ENCODE measurements at regions of chr2 and their contacts with region 1.

Region 1: GRCh38 chr2:169109502-169110409 is 40.4 kb downstream of the DHRS9 start:
- DNase-seq: peak; percentile 88
- H3K4me3 Mint-ChIP-seq: no peak overlapping the region
- H3K27ac Mint-ChIP-seq: no peak overlapping the region
- H3K4me1 Mint-ChIP-seq: no peaks in the 10 kb centered on the region
- H3K27me3 Mint-ChIP-seq: no peaks in the 10 kb centered on the region
- CTCF ChIP-seq: peak; percentile 87

Region 2: GRCh38 chr2:168961450-168962229 is 148.1 kb before region 1 on chr2:
- CTCF ChIA-PET with region 1: interaction called, 35 read pairs
- POLR2A ChIA-PET with region 1: no interaction called
- intact Hi-C with region 1: loop called (anchors 1 kb)
- DNase-seq: peak; percentile 86
- H3K4me3 Mint-ChIP-seq: no peak overlapping the region
- H3K27ac Mint-ChIP-seq: no peak overlapping the region
- H3K4me1 Mint-ChIP-seq: peaks cover 9% of the 10 kb centered on the region
- H3K27me3 Mint-ChIP-seq: no peaks in the 10 kb centered on the region
- CTCF ChIP-seq: peak; percentile 84

Region 3: DNA sequence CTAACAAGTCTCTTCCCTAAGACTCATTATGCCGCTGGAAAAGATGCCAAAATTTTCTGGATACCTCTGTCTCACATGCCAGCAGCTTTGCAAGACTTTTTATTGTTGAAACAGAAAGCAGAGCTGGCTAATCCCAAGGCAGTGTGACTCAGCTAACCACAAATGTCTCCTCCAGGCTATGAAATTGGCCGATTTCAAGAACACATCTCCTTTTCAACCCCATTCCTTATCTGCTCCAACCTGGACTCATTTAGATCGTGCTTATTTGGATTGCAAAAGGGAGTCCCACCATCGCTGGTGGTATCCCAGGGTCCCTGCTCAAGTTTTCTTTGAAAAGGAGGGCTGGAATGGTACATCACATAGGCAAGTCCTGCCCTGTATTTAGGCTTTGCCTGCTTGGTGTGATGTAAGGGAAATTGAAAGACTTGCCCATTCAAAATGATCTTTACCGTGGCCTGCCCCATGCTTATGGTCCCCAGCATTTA is 14.1 kb before region 1 on chr2:
- CTCF ChIA-PET with region 1: interaction called, 49 read pairs
- POLR2A ChIA-PET with region 1: interaction called, 3 read pairs
- intact Hi-C with region 1: no loop called
- DNase-seq: peak; percentile 99
- H3K4me3 Mint-ChIP-seq: peak overlapping the region; percentile 52
- H3K27ac Mint-ChIP-seq: peak overlapping the region; percentile 3
- H3K4me1 Mint-ChIP-seq: peaks cover 45% of the 10 kb centered on the region
- H3K27me3 Mint-ChIP-seq: no peaks in the 10 kb centered on the region
- CTCF ChIP-seq: no peak

Region 4: GRCh38 chr2:169141713-169142352 is 32.1 kb after region 1 on chr2:
- CTCF ChIA-PET with region 1: interaction called, 75 read pairs
- POLR2A ChIA-PET with region 1: interaction called, 3 read pairs
- intact Hi-C with region 1: loop called (anchors 1 kb)
- DNase-seq: peak; percentile 83
- H3K4me3 Mint-ChIP-seq: no peak overlapping the region
- H3K27ac Mint-ChIP-seq: no peak overlapping the region
- H3K4me1 Mint-ChIP-seq: peaks cover 6% of the 10 kb centered on the region
- H3K27me3 Mint-ChIP-seq: no peaks in the 10 kb centered on the region
- CTCF ChIP-seq: peak; percentile 76

Region 5: DNA sequence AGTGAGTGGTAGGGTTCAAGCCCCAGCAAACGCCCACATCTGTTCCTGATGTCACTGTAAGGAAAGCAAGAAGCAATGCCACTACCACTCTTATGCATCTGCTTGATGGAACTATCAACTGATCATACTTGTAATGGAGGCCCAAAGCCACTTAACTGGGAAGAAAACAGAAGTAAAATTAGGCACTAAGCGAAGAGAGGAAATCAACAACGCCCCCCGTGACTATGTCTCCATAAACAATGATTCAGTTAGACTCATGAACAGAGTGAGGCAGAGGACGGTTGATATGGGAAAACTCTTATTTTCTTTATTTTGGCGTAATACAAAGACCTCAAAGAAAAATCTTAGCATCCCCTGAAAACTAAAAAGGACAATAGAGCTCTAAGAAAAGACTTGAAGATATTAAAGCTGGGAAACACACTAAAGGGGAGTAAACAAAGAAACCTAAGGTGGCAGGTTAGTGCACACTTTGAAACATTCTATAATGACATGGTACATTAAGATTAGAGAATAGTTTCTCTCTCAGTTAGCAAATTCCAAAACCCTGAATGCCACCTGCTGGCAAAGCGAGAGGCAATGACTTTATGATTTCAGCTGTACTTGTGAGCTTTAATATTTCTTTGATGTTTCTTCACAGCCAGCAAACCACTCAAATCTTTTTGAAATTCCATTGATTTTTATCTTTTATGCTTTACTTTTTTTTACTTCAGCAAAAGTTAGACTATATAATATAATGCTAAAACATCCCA is 166.1 kb after region 1 on chr2:
- CTCF ChIA-PET with region 1: interaction called, 29 read pairs
- POLR2A ChIA-PET with region 1: no interaction called
- intact Hi-C with region 1: loop called (anchors 1 kb)
- DNase-seq: peak; percentile 31
- H3K4me3 Mint-ChIP-seq: no peak overlapping the region
- H3K27ac Mint-ChIP-seq: no peak overlapping the region
- H3K4me1 Mint-ChIP-seq: no peaks in the 10 kb centered on the region
- H3K27me3 Mint-ChIP-seq: peaks cover 70% of the 10 kb centered on the region
- CTCF ChIP-seq: peak; percentile 25